ENCODE measurements at regions of chr3 and their contacts with region 1.

Region 1: DNA sequence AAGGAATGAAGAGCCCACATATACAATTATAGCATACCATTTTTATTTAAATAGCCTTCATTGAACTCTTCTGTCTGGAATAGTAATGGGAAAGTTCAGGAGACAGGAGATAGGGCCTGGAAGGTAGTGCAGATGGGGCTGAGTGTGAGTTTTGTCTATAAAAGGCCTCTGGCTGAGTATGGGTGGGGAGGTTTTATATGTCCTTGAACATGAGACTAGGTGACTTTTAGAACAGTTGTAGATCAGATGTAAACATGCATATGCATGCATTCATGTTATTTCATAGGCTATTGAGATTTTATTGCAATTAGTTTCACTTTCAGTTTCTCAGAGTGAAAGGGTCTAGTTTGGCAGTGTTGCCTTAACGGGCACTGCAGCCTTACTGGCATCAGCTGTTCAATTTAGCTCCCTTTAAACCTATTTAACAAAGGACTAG is 27.1 kb downstream of the CGGBP1 start:
- DNase-seq: peak; percentile 62 to 87 (median 81)
- H3K4me3 ChIP-seq: peak overlapping the region in 6 of 7 experiments; percentile 46 to 83 (median 63)
- H3K27ac ChIP-seq: peak overlapping the region; percentile 62 to 84
- H3K4me1 ChIP-seq: peaks cover 5 to 47% (median 26%) of the 10 kb centered on the region in 4 experiments
- H3K27me3 ChIP-seq: no peaks in the 10 kb centered on the region

Region 2: DNA sequence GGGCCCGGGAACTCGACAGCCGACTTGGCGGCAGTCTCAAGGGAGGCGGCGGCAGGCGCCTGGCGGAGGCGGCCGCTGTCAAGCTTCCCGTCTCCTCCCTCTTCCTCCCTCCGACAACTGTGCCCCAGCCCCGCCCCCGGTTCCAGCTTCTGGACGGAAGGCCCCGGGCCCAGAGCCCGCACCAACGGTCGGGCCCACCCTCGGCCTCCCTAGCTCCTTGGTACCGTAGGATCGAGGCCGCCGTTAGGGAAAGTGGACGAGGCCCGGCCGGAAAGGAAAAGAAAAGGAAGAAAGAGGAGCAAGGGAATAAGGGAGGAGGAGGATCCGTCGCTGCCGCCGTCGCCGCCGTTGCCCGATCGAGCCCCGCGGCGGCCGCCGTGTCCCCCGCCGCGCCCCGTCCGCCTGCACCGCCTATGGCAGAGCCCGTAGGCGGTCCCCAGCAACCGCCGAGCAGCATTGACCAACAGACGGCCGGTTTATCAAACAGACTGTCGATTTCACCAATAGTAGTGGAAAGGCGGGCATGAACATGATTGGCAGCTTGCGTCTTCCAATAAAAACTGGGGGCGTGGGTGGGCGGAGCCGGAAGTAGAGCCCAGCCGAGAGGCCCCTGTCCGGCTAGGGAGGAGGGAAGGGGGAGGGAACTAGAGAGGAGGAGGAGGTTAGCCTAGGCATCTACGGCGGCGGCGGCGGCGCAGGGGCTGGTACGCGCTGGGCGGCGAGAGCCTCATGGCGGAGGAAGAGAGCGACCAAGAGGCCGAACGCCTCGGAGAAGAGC is 27.1 kb after region 1 on chr3 and contains the starts of genes CGGBP1 and ZNF654:
- CTCF ChIA-PET with region 1: interaction called, 7 read pairs
- POLR2A ChIA-PET with region 1: interaction called, 11 read pairs
- DNase-seq: peak; percentile 99 to 100 (median 99)
- H3K4me3 ChIP-seq: peak within 1 kb of the TSS; percentile 93 to 99 (median 97)
- H3K27ac ChIP-seq: peak within 1 kb of the TSS; percentile 88 to 93
- H3K4me1 ChIP-seq: peaks cover 13 to 50% (median 30%) of the 10 kb centered on the region in 4 experiments
- H3K27me3 ChIP-seq: no peaks in the 10 kb centered on the region